ENCODE measurements at regions of chr12 and their contacts with region 1.

Region 1: GRCh38 chr12:96219698-96220206 is 25.6 kb downstream of the ELK3 start:
- DNase-seq: no peak
- H3K4me3 Mint-ChIP-seq: no peak overlapping the region
- H3K27ac Mint-ChIP-seq: no peak overlapping the region
- H3K4me1 Mint-ChIP-seq: peaks cover 27% of the 10 kb centered on the region
- H3K27me3 Mint-ChIP-seq: no peaks in the 10 kb centered on the region

Region 2: GRCh38 chr12:96132819-96133218 is 86.9 kb before region 1 on chr12:
- intact Hi-C with region 1: loop called (anchors 2 kb)
- DNase-seq: peak; percentile 69
- H3K4me3 Mint-ChIP-seq: no peak overlapping the region
- H3K27ac Mint-ChIP-seq: no peak overlapping the region
- H3K4me1 Mint-ChIP-seq: peaks cover 10% of the 10 kb centered on the region
- H3K27me3 Mint-ChIP-seq: peaks cover 14% of the 10 kb centered on the region

Region 3: GRCh38 chr12:96335270-96335669 is 115.5 kb after region 1 on chr12:
- intact Hi-C with region 1: no loop called
- DNase-seq: no peak
- H3K4me3 Mint-ChIP-seq: peak overlapping the region; percentile 51
- H3K27ac Mint-ChIP-seq: peak overlapping the region; percentile 12
- H3K4me1 Mint-ChIP-seq: peaks cover 29% of the 10 kb centered on the region
- H3K27me3 Mint-ChIP-seq: no peaks in the 10 kb centered on the region

Region 4: GRCh38 chr12:96751626-96752025 is 531.9 kb after region 1 on chr12:
- intact Hi-C with region 1: no loop called
- DNase-seq: no peak
- H3K4me3 Mint-ChIP-seq: no peak overlapping the region
- H3K27ac Mint-ChIP-seq: no peak overlapping the region
- H3K4me1 Mint-ChIP-seq: no peaks in the 10 kb centered on the region
- H3K27me3 Mint-ChIP-seq: peaks cover 10% of the 10 kb centered on the region

Measured in activated CD4-positive, alpha-beta T cell treated with anti-CD3 and anti-CD28 coated beads, Interleukin-2, amount 10 ng/mL, durations not matched to agents 24 days and 14 days (primary cell).